ENCODE measurements at regions of chr19 and their contacts with region 1.

Region 1: GRCh38 chr19:29844891-29845572 is 33.2 kb downstream of the CCNE1 start:
- DNase-seq: peak; percentile 92 to 97
- ATAC-seq: peak; percentile 93 to 95 (median 94)
- H3K4me3 ChIP-seq: peak overlapping the region; percentile 84
- H3K27ac ChIP-seq: peak overlapping the region; percentile 82
- H3K4me1 ChIP-seq: peaks cover 12% of the 10 kb centered on the region
- H3K27me3 ChIP-seq: peaks cover 0 to 10% (median 0%) of the 10 kb centered on the region in 3 donors
- CTCF ChIP-seq: no peak

Region 2: DNA sequence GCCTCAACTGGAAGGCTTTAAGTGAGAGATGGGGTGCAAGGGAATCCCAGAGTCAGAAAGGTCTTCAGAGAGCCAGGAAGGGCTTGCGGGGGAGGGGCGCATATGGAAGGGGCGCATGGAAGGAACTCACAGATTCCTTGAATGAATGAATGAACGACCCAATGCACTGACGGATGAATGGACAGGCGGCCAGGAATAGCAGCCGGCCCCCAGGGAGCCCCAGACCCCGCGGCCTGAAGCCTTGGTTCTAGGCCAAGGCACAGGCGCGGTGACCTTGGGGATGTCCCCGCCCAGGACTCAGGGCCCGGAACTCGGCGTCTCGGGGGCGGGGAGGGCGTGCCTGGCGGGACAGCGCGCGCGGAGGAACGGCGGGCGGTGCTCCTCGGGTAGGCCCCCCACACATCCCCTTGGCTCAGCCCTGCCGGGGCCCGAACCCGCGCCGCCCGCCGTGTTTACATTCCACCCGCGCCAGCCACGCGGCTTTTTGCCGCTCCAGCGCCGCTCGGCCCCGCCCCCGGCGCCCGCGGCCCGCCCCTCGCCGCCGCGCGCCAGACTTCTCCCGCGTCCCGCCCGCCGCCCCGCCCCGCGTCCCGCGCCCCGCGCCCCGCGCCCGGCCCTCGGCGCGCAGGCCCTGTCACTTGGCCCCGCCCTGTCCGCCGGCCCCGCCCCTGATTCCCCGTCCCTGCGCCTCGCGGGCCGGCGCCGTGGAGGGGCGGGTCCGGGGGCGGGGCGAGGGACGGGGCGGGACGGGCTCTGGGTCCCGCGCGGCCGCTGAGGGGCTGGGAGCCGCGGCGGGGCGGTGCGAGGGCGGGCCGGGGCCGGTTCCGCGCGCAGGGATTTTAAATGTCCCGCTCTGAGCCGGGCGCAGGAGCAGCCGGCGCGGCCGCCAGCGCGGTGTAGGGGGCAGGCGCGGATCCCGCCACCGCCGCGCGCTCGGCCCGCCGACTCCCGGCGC is 33.6 kb before region 1 on chr19 and contains the start of gene CCNE1:
- intact Hi-C with region 1: loop called (anchors 2 to 5 kb)
- DNase-seq: peak; percentile 96 to 97
- ATAC-seq: peak; percentile 97 to 99 (median 99)
- H3K4me3 ChIP-seq: peak within 1 kb of the TSS; percentile 71
- H3K27ac ChIP-seq: peak within 1 kb of the TSS; percentile 61
- H3K4me1 ChIP-seq: no peaks in the 10 kb centered on the region
- H3K27me3 ChIP-seq: no peaks in the 10 kb centered on the region
- CTCF ChIP-seq: no peak
- total RNA-seq, gene CCNE1: 0.97 to 2.3 (median 2.1) TPM

Region 3: GRCh38 chr19:29860492-29860891 is 15.5 kb after region 1 on chr19:
- intact Hi-C with region 1: no loop called
- DNase-seq: peak in 1 of 2 donors; percentile 0
- ATAC-seq: no peak
- H3K4me3 ChIP-seq: no peak overlapping the region
- H3K27ac ChIP-seq: no peak overlapping the region
- H3K4me1 ChIP-seq: peaks cover 10% of the 10 kb centered on the region
- H3K27me3 ChIP-seq: no peaks in the 10 kb centered on the region
- CTCF ChIP-seq: no peak